ENCODE measurements at regions of chr2 and their contacts with region 1.

Region 1: DNA sequence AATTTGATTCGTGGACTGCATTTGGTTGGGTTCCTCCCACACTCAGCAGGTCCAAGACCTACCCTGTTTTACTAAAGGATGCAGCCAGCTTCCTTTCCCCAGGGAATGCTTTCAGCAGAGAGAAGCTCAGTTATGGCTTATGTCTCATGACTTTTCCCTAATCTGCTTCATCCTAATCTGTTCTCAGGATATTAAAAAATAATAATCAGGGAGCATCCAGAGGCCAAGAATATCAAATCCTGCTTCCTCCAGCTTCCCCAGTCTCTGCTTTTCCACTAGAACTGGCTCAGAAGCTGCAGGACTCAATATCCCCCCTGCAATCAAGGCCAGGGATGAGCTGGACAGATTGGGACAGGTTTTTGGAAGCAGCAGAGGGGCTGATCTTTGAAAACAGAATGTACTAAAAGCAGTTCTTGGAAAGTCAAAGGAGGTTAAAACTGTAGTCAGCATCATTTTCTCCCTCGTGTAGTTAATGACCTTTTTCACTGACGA is 326.9 kb upstream of the TNP1 start:
- DNase-seq: peak in 1 of 2 donors; percentile 74
- ATAC-seq: peak; percentile 78 to 93 (median 90)
- H3K4me3 ChIP-seq: no peak overlapping the region
- H3K27ac ChIP-seq: peak overlapping the region in 7 of 10 donors; percentile 19 to 63 (median 41)
- H3K4me1 ChIP-seq: peaks cover 0 to 27% (median 10%) of the 10 kb centered on the region in 9 donors
- H3K27me3 ChIP-seq: peaks cover 0 to 29% (median 0%) of the 10 kb centered on the region in 7 donors
- CTCF ChIP-seq: no peak

Region 2: GRCh38 chr2:217497843-217498377 is 311.2 kb after region 1 on chr2:
- intact Hi-C with region 1: loop called in 1 of 10 experiments (anchors 10 kb)
- DNase-seq: no peak
- ATAC-seq: no peak
- H3K4me3 ChIP-seq: no peak overlapping the region
- H3K27ac ChIP-seq: no peak overlapping the region
- H3K4me1 ChIP-seq: no peaks in the 10 kb centered on the region
- H3K27me3 ChIP-seq: no peaks in the 10 kb centered on the region
- CTCF ChIP-seq: no peak

Region 3: GRCh38 chr2:217707131-217707667 is 520.5 kb after region 1 on chr2:
- intact Hi-C with region 1: loop called in 1 of 10 experiments (anchors 5 kb)
- DNase-seq: peak in 1 of 2 donors; percentile 11
- ATAC-seq: peak; percentile 30 to 71 (median 54)
- H3K4me3 ChIP-seq: no peak overlapping the region
- H3K27ac ChIP-seq: peak overlapping the region in 4 of 10 donors; percentile 16 to 37 (median 28)
- H3K4me1 ChIP-seq: peaks cover 0 to 12% (median 9%) of the 10 kb centered on the region in 9 donors
- H3K27me3 ChIP-seq: no peaks in the 10 kb centered on the region
- CTCF ChIP-seq: no peak

Measured in heart right ventricle (tissue), 16 donors.